ENCODE measurements at regions of chr3 and their contacts with region 1.

Region 1: GRCh38 chr3:146817704-146818103 is 212.6 kb upstream of the PLSCR5 start:
- DNase-seq: no peak
- ATAC-seq: no peak

Region 2: DNA sequence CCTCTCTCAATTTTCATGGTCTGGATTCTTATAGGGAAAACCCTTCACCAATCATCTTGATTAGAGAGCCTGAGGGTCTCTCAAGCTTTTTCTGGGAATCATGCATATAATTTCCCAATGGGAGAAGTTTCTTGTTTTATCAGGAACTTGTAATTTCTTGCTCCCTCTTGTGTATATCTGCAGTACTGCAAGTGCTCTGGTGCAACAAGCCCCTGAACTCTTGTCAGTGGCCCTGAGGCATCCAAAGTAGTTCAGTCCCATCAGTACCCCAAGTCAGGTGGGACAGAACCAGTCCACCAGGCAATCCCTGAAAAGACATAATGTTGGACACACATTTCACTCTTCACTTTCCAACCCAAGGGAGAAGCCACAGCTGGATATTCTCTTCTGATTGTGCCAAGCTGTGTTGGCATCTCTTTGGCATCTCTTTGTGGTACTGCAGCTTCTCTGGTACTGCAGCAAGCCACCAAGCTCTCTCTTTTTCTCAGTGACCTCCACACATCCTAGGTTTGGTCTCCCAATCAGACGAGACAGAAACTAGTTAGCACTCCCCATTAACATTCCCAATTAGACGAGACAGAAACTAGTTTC is 374.2 kb after region 1 on chr3:
- intact Hi-C with region 1: loop called (anchors 10 kb)
- DNase-seq: no peak
- ATAC-seq: no peak